Tibial artery (tissue), 4 donors: ENCODE measurements at regions of chr2 and their contacts with region 1.

Region 1: DNA sequence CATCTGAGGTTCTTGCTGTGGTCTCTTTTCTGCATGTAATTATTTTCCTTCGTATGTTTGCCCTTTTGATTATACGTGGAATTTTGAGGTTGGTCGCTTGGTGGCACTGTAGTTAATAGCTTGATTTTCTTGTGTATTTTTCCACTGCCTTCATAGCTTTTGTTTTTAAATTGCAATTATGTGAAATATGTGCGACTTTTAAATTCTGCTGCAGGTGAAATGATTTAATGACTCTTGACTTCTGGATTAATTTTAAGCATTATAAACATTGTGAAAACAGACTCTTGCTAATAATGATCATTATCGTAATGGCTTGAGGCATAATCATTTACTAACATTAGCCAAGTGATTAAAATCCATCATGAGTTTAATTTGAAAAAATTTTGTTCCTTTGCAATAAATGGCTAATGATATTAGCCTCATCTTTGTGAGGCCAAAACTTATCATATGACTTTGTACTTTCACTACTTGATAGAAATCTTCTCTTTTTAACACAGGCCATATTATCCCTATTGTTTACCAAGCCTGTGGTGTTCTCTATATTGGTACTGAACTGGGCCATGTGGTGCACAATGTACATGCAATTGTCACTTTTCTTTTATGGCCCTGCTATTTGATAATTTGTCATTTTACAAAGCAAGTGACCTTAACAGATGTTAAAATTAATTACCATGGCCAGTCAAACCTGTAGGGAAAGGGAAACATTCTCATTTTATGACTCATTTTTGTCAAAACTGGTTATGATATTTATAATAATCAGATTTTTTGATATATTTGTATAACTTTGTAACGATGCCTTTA is 62.8 kb upstream of the NEUROD1 start:
- DNase-seq: peak in 1 of 2 donors; percentile 32
- H3K4me3 ChIP-seq: no peak overlapping the region
- H3K27ac ChIP-seq: no peak overlapping the region
- H3K4me1 ChIP-seq: peaks cover 0 to 5% (median 2%) of the 10 kb centered on the region in 4 donors
- H3K27me3 ChIP-seq: no peaks in the 10 kb centered on the region
- CTCF ChIP-seq: peak; percentile 64 to 79

Region 2: GRCh38 chr2:181780047-181780651 is 37.0 kb after region 1 on chr2:
- intact Hi-C with region 1: no loop called
- DNase-seq: no peak
- H3K4me3 ChIP-seq: no peak overlapping the region
- H3K27ac ChIP-seq: no peak overlapping the region
- H3K4me1 ChIP-seq: peaks cover 0 to 15% (median 5%) of the 10 kb centered on the region in 4 donors
- H3K27me3 ChIP-seq: no peaks in the 10 kb centered on the region
- CTCF ChIP-seq: no peak

Region 3: DNA sequence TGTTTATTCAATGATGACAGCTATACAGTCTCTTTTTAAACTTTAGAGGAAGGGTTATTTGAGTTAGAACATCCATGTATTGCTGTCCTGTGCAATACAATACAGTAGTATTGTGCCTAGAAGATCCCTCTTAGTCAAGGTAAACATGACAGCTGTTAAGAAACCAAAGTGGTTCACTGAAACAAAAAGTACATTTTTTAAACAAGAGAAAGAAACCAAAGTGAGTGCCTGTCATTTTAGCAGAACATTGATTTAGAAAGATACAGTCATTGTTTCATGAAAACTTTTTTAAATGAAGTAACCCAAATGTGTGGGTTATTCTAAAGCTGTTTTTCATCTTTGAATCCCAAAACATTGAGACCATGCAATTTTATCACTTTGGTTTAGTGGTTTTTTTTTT is 163.9 kb after region 1 on chr2:
- intact Hi-C with region 1: loop called (anchors 5 kb)
- DNase-seq: no peak
- H3K4me3 ChIP-seq: no peak overlapping the region
- H3K27ac ChIP-seq: no peak overlapping the region
- H3K4me1 ChIP-seq: peaks cover 0 to 48% (median 5%) of the 10 kb centered on the region in 4 donors
- H3K27me3 ChIP-seq: no peaks in the 10 kb centered on the region
- CTCF ChIP-seq: no peak

Region 4: DNA sequence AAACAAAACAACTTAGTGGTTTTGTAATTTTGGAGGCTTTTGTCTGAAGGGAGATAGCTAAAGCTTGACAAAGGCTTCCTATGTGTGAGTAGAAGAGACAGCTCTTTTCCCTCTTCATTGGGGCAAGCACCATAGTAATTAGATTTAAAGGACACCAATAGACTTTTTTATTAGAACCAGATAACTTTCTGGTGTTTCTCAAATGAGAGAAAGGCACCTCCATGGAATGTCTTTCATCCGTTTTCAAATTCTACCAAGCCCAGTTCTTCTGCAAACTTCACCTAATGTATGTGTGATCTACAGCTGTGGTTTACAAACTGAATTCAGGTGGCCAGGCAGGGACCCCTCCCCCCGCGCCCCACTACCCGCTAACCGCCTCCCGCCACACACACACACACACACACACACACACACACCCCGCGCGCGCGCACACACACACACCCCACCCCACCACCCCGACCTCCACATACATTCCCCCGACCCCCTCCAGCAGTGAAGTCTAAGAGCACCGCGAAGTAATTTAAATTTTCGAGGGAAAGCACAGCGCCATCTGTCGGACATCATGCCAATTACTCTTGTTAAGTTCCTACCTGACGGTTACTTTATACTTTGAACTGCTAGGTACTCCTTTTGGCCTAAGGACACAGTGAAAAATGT is 210.9 kb after region 1 on chr2:
- intact Hi-C with region 1: loop called (anchors 5 kb)
- DNase-seq: peak in 1 of 2 donors; percentile 30
- H3K4me3 ChIP-seq: peak overlapping the region; percentile 33 to 40
- H3K27ac ChIP-seq: no peak overlapping the region
- H3K4me1 ChIP-seq: peaks cover 0 to 10% (median 0%) of the 10 kb centered on the region in 4 donors
- H3K27me3 ChIP-seq: no peaks in the 10 kb centered on the region
- CTCF ChIP-seq: peak; percentile 46 to 61

Region 5: GRCh38 chr2:182077451-182078142 is 334.5 kb after region 1 on chr2:
- intact Hi-C with region 1: loop called (anchors 5 kb)
- DNase-seq: peak in 1 of 2 donors; percentile 28
- H3K4me3 ChIP-seq: no peak overlapping the region
- H3K27ac ChIP-seq: no peak overlapping the region
- H3K4me1 ChIP-seq: peaks cover 0 to 8% (median 0%) of the 10 kb centered on the region in 4 donors
- H3K27me3 ChIP-seq: no peaks in the 10 kb centered on the region
- CTCF ChIP-seq: peak; percentile 69 to 78